Mammary epithelial cell (primary cell): ENCODE measurements at regions of chr7 and their contacts with region 1.

Region 1: GRCh38 chr7:140876519-140877248 is 48.0 kb downstream of the BRAF start:
- DNase-seq: peak; percentile 65
- H3K4me3 ChIP-seq: no peak overlapping the region
- H3K27ac ChIP-seq: no peak overlapping the region
- H3K4me1 ChIP-seq: peaks cover 2% of the 10 kb centered on the region
- H3K27me3 ChIP-seq: no peaks in the 10 kb centered on the region
- CTCF ChIP-seq: no peak

Region 2: GRCh38 chr7:140831724-140832123 is 45.0 kb before region 1 on chr7:
- CTCF ChIA-PET with region 1: no interaction called
- dilution Hi-C with region 1: loop called (anchors 5 kb)
- in situ Hi-C with region 1: no loop called
- intact Hi-C with region 1: no loop called
- DNase-seq: no peak
- H3K4me3 ChIP-seq: no peak overlapping the region
- H3K27ac ChIP-seq: no peak overlapping the region
- H3K4me1 ChIP-seq: no peaks in the 10 kb centered on the region
- H3K27me3 ChIP-seq: no peaks in the 10 kb centered on the region
- CTCF ChIP-seq: no peak

Region 3: DNA sequence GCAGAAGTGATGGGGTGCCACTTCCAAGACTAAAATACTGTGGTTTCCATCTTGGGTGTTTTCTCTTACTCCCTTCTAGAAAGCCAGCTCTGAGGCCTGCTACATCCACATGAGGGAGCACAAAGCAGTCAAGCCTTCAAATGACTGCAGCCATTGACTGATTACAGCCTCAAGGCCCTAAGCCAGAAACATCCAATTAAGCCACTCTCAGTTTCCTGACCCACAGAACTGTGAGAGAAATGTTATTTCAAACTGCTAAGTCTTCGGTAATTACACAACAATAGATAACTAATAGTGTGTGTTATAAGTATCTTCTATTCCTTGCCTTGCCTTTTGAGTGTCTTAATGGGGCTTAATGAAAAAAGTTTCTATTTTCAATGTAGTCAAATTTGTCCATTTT is 23.2 kb after region 1 on chr7:
- CTCF ChIA-PET with region 1: no interaction called
- dilution Hi-C with region 1: no loop called
- in situ Hi-C with region 1: no loop called
- intact Hi-C with region 1: no loop called
- DNase-seq: no peak
- H3K4me3 ChIP-seq: no peak overlapping the region
- H3K27ac ChIP-seq: no peak overlapping the region
- H3K4me1 ChIP-seq: no peaks in the 10 kb centered on the region
- H3K27me3 ChIP-seq: no peaks in the 10 kb centered on the region
- CTCF ChIP-seq: no peak

Region 4: DNA sequence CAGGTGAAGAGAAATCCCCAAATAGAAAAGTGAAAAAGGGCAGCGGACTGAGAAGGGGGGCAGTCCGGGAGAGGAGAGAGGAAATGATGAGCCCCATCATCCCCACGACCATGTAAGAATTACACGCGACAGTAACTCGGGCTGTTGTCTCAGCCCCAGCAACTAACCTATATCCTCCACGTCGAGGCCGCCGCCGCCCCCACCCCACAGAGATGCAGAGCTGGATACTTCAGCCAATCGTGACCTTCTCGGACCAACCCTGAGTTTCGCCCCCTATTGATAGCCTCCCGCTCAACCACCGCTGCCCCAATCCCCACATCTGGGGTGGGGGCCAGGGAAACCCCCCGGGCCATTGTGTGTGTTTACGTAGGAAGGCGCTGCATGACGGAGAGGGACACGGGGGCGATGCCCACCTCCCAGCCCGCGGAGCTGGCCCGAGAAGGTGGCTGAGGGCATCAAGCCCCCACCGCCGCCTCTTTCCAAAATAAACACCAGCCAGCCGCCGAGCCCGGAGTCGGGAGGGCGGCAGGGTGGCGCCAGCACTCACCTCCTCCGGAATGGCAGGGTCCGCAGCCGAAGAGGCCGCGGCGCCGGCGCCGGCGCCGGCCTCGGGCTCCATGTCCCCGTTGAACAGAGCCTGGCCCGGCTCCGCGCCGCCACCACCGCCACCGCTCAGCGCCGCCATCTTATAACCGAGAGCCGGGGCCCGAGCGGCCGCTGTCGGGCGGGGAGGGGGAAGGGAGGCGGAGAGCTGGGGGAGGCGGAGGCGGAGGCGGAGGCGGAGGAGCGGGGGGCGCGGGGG is 47.5 kb after region 1 on chr7:
- CTCF ChIA-PET with region 1: interaction called, 33 read pairs
- dilution Hi-C with region 1: no loop called
- in situ Hi-C with region 1: no loop called
- intact Hi-C with region 1: no loop called
- DNase-seq: peak; percentile 60
- H3K4me3 ChIP-seq: peak overlapping the region; percentile 75 to 89 (median 83)
- H3K27ac ChIP-seq: peak overlapping the region; percentile 90
- H3K4me1 ChIP-seq: peaks cover 4% of the 10 kb centered on the region
- H3K27me3 ChIP-seq: no peaks in the 10 kb centered on the region
- CTCF ChIP-seq: peak in 1 of 2 donors; percentile 44

Region 5: GRCh38 chr7:140961117-140961516 is 84.4 kb after region 1 on chr7:
- CTCF ChIA-PET with region 1: no interaction called
- dilution Hi-C with region 1: loop called (anchors 5 kb)
- in situ Hi-C with region 1: no loop called
- intact Hi-C with region 1: no loop called
- DNase-seq: no peak
- H3K4me3 ChIP-seq: no peak overlapping the region
- H3K27ac ChIP-seq: no peak overlapping the region
- H3K4me1 ChIP-seq: no peaks in the 10 kb centered on the region
- H3K27me3 ChIP-seq: no peaks in the 10 kb centered on the region
- CTCF ChIP-seq: no peak